ENCODE measurements at regions of chr7 and their contacts with region 1.

Region 1: GRCh38 chr7:64951250-64951848 is 39.5 kb downstream of the ZNF117 start:
- DNase-seq: no peak
- ATAC-seq: peak; percentile 58
- H3K4me3 Mint-ChIP-seq: no peak overlapping the region
- H3K27ac Mint-ChIP-seq: no peak overlapping the region
- H3K4me1 Mint-ChIP-seq: peaks cover 3% of the 10 kb centered on the region
- H3K27me3 Mint-ChIP-seq: peaks cover 31% of the 10 kb centered on the region
- CTCF ChIP-seq: peak; percentile 16

Region 2: DNA sequence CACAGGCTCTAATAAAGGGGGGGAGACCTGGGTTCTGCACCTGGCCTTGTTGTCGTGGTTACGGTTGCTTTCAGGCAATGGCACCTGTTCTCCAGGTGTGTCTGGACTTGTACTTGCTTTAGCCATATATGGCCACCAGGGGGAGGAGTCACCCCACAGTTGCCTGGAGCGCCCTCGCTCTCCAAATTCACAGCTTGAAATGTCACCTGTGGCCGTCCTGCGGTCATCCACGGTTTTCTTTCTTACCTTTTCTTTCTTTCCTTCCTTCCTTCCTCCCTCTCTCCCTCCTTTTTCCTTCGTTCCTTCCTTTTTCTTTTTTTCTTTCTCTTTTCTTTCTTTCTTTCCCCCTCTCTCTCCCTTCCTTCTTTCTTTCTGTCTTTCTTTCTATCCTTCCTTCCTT is 265.1 kb after region 1 on chr7:
- CTCF ChIA-PET with region 1: interaction called, 3 read pairs
- POLR2A ChIA-PET with region 1: no interaction called
- intact Hi-C with region 1: loop called (anchors 1 kb)
- DNase-seq: no peak
- ATAC-seq: peak; percentile 65
- H3K4me3 Mint-ChIP-seq: no peak overlapping the region
- H3K27ac Mint-ChIP-seq: no peak overlapping the region
- H3K4me1 Mint-ChIP-seq: peaks cover 3% of the 10 kb centered on the region
- H3K27me3 Mint-ChIP-seq: peaks cover 2% of the 10 kb centered on the region
- CTCF ChIP-seq: no peak

Region 3: DNA sequence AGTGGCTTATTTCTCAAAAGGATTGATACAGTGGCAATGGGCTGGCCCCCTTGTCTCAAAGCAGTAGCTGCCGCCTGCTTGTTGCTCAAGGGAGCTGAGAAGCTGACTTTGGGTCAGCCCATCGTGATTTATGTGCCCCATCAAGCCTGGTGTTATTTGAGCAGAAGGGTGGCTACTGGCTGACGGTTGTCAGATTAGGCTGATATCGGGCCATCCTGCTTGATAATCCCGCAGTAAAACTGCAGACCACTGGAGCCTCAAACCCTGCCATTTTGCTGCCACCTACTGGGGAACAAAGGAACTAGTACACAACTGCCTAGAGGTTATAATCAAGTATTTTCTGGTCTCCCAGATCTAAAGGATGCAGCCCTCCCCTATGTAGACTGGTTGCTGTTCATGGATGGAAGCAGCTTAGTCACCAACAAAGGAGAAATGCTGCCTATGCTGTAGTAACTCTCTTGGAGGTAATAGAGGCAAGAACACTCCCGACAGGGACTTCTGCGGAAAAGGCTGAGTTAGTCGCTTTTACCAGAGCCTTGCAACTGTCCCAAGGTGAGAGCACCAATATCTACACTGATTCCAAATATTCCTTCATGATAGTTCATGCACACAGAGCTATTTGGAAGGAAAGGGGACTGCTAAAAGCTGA is 356.4 kb after region 1 on chr7:
- CTCF ChIA-PET with region 1: interaction called, 60 read pairs
- POLR2A ChIA-PET with region 1: no interaction called
- intact Hi-C with region 1: loop called (anchors 1 kb)
- DNase-seq: peak; percentile 22
- ATAC-seq: peak; percentile 79
- H3K4me3 Mint-ChIP-seq: no peak overlapping the region
- H3K27ac Mint-ChIP-seq: no peak overlapping the region
- H3K4me1 Mint-ChIP-seq: peaks cover 5% of the 10 kb centered on the region
- H3K27me3 Mint-ChIP-seq: peaks cover 2% of the 10 kb centered on the region
- CTCF ChIP-seq: no peak

Region 4: GRCh38 chr7:65448816-65449504 is 497.6 kb after region 1 on chr7:
- CTCF ChIA-PET with region 1: no interaction called
- POLR2A ChIA-PET with region 1: no interaction called
- intact Hi-C with region 1: loop called (anchors 5 kb)
- DNase-seq: no peak
- ATAC-seq: no peak
- H3K4me3 Mint-ChIP-seq: no peak overlapping the region
- H3K27ac Mint-ChIP-seq: no peak overlapping the region
- H3K4me1 Mint-ChIP-seq: peaks cover 22% of the 10 kb centered on the region
- H3K27me3 Mint-ChIP-seq: peaks cover 5% of the 10 kb centered on the region
- CTCF ChIP-seq: no peak

Measured in activated B cell treated with CpG ODN at 0.5 μM for 24 hours (primary cell).